PC-9 (cell line): ENCODE measurements at regions of chr6 and their contacts with region 1.

Region 1: GRCh38 chr6:129498950-129499842 is 210.8 kb downstream of the ARHGAP18 start:
- DNase-seq: peak in 1 of 2 experiments; percentile 57
- H3K4me3 ChIP-seq: peak overlapping the region; percentile 15; the same call in 1 of the 2 replicates
- H3K27ac ChIP-seq: no peak overlapping the region
- H3K4me1 ChIP-seq: peaks cover 25% of the 10 kb centered on the region
- H3K27me3 ChIP-seq: no peaks in the 10 kb centered on the region
- CTCF ChIP-seq: peak; percentile 96

Region 2: DNA sequence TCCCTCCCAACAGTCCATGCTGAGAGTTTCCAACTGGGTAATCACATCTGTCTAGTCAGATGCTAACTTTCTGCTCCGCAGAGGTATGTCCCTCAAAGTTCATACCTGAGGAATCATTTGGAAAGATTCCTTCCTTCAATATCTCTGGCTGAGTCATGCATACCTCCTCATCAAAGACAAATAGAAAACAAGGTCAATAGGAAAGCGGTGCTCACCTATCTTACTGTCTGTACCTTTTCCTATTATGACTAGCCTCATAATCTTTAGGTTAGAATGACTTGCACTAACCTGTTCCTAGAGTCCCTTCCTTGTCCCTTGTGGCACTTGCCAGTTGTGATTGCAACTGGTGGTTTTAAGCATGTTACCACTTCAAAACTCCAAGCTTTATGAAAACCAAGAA is 900.6 kb before region 1 on chr6:
- CTCF ChIA-PET with region 1: no interaction called
- POLR2A ChIA-PET with region 1: no interaction called
- intact Hi-C with region 1: no loop called
- DNase-seq: peak; percentile 38 to 97
- H3K4me3 ChIP-seq: no peak overlapping the region
- H3K27ac ChIP-seq: peak overlapping the region; percentile 81
- H3K4me1 ChIP-seq: peaks cover 52% of the 10 kb centered on the region
- H3K27me3 ChIP-seq: no peaks in the 10 kb centered on the region
- CTCF ChIP-seq: no peak

Region 3: GRCh38 chr6:129469070-129469662 is 30.0 kb before region 1 on chr6:
- CTCF ChIA-PET with region 1: no interaction called
- POLR2A ChIA-PET with region 1: no interaction called
- intact Hi-C with region 1: no loop called
- DNase-seq: no peak
- H3K4me3 ChIP-seq: no peak overlapping the region
- H3K27ac ChIP-seq: no peak overlapping the region
- H3K4me1 ChIP-seq: no peaks in the 10 kb centered on the region
- H3K27me3 ChIP-seq: no peaks in the 10 kb centered on the region
- CTCF ChIP-seq: no peak; the same call in 1 of the 2 replicates

Region 4: GRCh38 chr6:129730477-129731165 is 231.4 kb after region 1 on chr6:
- CTCF ChIA-PET with region 1: interaction called, 5 read pairs
- POLR2A ChIA-PET with region 1: no interaction called
- intact Hi-C with region 1: loop called (anchors 5 kb)
- DNase-seq: peak in 1 of 2 experiments; percentile 50
- H3K4me3 ChIP-seq: no peak overlapping the region
- H3K27ac ChIP-seq: no peak overlapping the region
- H3K4me1 ChIP-seq: no peaks in the 10 kb centered on the region
- H3K27me3 ChIP-seq: no peaks in the 10 kb centered on the region
- CTCF ChIP-seq: peak; percentile 89

Region 5: GRCh38 chr6:130020907-130021629 is 521.9 kb after region 1 on chr6:
- CTCF ChIA-PET with region 1: interaction called, 6 read pairs
- POLR2A ChIA-PET with region 1: no interaction called
- intact Hi-C with region 1: loop called (anchors 1 kb)
- DNase-seq: peak; percentile 71 to 76
- H3K4me3 ChIP-seq: peak overlapping the region; percentile 70
- H3K27ac ChIP-seq: no peak overlapping the region
- H3K4me1 ChIP-seq: no peaks in the 10 kb centered on the region
- H3K27me3 ChIP-seq: no peaks in the 10 kb centered on the region
- CTCF ChIP-seq: peak; percentile 95